A549 (cell line): ENCODE measurements at regions of chr14 and their contacts with region 1.

Region 1: DNA sequence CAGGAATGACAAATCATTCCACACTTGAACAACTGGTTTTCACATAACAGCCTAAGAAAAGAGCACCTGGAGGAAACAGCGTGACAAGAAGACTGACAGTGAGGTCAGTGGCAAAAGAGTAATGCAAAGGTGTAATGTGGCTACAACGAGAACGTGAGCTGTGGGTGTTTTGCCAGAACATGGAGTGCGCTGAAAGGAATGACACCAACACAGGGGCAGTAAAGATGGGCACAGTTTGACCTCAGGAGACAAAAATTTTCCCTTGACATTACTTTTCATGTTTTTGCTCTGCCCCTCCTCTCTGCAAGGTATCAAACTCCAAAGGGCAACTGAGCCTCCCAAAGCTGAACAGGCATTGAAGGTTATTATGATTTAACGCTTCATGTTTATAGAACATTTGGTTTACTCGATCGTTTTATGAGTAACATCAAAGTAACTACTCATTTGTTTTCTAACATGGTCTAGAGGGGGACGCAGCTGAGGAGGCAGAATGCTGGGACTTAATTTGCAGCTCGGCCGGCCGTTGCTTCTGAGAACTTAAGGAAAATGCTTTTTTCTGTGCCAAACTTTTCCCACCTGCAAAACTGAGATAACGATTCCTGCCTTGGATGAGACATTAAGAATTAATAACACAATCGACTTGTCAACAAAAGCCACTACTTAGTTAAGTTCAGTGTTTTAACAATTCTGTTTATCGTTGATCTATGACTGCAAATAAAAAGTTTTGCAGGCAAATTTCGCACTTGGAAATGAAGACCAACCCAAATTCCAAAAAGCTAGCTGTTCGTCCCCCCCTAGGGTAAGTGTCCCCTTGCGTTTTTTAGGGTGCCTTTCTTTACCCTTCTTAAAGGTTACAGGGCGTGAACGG is 954 bp downstream of the HAUS4 start:
- DNase-seq: no peak
- ATAC-seq: no peak
- H3K4me3 ChIP-seq: peak overlapping the region; percentile 47
- H3K27ac ChIP-seq: peak overlapping the region; percentile 88 to 97
- H3K4me1 ChIP-seq: peaks cover 14% of the 10 kb centered on the region
- CTCF ChIP-seq: no peak
- EP300 ChIP-seq: no peak
- POLR2A ChIP-seq: no peak
- RAD21 ChIP-seq: no peak

Region 2: GRCh38 chr14:22918804-22919600 is 36.9 kb before region 1 on chr14 and contains the start of gene RBM23:
- CTCF ChIA-PET with region 1: interaction called, 3 read pairs
- POLR2A ChIA-PET with region 1: interaction called, 11 read pairs
- DNase-seq: peak; percentile 95 to 100
- ATAC-seq: peak; percentile 96 to 98
- H3K4me3 ChIP-seq: peak within 1 kb of the TSS; percentile 71
- H3K27ac ChIP-seq: peak within 1 kb of the TSS; percentile 87 to 92
- H3K4me1 ChIP-seq: peaks cover 18% of the 10 kb centered on the region
- CTCF ChIP-seq: no peak
- EP300 ChIP-seq: no peak
- POLR2A ChIP-seq: peak; percentile 75
- RAD21 ChIP-seq: no peak
- polyA plus RNA-seq, gene RBM23: 68.0 and 71.7 TPM in 2 replicates

Region 3: GRCh38 chr14:22939684-22940083 is 16.3 kb before region 1 on chr14:
- CTCF ChIA-PET with region 1: interaction called, 16 read pairs
- POLR2A ChIA-PET with region 1: no interaction called
- DNase-seq: no peak
- ATAC-seq: no peak
- H3K4me3 ChIP-seq: no peak overlapping the region
- H3K27ac ChIP-seq: no peak overlapping the region
- H3K4me1 ChIP-seq: no peaks in the 10 kb centered on the region
- CTCF ChIP-seq: no peak
- EP300 ChIP-seq: no peak
- POLR2A ChIP-seq: no peak
- RAD21 ChIP-seq: no peak

Region 4: DNA sequence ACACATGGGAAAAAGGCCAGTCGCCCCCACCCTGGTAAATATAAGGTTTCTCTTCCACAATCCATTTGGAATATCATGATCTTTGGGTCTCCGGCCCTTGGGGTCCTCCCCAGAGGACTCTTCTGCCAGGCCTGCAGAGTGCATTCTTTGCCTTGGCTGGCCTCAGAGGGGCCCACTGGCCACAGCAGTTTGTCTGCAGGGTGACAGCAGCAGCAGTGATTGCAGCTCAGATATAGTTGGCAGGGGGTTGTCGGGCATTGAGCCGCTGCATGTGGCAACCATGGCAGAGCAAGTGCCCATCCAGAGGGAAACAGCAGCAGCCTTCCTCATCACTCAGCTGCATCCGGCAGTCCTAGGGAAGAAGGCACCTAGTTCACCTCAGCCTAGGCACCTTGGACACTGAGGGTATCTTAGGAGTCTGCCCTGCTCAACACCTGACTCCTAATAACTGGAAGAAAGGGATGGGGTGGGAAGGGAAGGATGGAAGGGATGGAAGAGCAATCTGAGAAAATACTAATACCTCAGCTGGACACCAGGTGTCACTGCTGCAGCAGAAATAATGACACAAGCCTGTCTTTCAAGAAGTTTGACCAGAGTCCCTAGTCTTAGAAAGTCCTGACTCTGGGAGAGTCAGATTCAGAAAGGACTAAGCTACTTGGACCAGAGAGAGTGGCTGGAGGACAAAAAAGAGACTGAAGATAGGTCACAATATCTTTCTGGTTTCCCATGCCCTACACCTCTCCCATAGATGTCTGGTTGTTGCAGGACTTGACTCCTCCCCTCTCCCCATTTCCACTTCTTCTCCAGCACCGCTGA is 17.5 kb after region 1 on chr14:
- CTCF ChIA-PET with region 1: interaction called, 30 read pairs
- POLR2A ChIA-PET with region 1: interaction called, 13 read pairs
- DNase-seq: peak; percentile 63 to 79
- ATAC-seq: peak; percentile 24 to 45
- H3K4me3 ChIP-seq: no peak overlapping the region
- H3K27ac ChIP-seq: peak overlapping the region; percentile 98 to 100
- H3K4me1 ChIP-seq: peaks cover 63% of the 10 kb centered on the region
- CTCF ChIP-seq: peak; percentile 83
- EP300 ChIP-seq: no peak
- POLR2A ChIP-seq: no peak
- RAD21 ChIP-seq: peak; percentile 86 to 87